ENCODE measurements at regions of chr16 and their contacts with region 1.

Region 1: DNA sequence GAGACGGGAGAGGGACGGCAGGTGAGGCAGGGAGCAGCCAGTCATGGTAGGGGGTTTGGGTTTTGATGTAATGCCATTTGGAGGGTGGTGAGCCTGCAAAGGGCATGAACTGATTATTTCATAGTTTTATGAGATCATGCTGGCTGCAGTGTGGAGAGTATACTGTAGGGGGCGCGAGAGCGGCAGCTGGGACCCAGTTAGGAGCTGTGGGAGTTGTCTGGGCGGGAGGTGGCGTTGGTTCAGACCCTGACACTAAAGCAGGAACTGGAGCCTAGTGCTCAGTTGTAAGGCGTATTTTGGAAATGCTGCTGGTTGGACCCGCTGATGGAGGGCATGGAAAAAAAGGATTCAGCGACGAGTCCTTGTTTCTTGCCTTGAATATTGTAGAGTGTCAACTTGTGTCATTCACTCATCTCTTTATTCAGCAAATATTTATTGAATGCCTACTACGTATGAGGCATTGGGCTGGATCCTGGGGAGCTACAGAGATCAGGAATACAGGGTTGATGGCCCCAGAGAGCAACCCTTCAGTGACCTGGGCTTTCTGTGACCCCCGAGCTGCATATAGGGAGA is 23.7 kb upstream of the KDM8 start:
- DNase-seq: peak; percentile 84
- CTCF ChIP-seq: peak; percentile 98

Region 2: GRCh38 chr16:27127308-27127707 is 52.3 kb before region 1 on chr16:
- in situ Hi-C with region 1: no loop called
- DNase-seq: no peak
- CTCF ChIP-seq: no peak

Region 3: DNA sequence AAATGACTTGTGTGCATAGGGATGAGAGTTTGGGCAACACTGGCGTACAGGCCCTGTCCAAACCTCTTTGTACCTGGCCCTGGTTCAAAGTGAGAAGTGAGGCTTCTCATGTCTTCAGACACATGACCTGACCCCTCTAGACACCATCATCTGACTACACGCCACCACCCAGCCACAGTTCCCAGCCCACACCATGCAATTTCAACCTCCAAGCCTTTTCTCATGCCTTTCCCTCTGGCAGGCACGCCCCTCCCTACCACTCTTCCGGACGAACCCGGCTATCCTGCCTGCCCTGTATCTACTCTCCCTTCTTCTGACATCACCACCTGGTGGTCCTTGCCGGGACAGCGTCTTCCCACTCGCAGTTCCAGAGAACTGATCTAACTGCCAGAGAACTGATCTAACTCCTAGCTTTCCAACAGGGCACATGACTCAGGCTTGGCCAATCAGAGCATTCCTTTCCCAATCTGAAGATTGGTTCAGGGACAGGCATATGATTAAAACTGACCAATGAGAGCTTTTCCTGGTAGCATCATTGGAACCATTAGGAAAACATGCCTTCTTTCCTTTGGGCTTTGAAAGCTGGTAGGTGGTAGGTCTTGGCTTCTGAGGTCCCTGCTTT is 195.3 kb after region 1 on chr16:
- in situ Hi-C with region 1: loop called (anchors 10 kb)
- DNase-seq: peak; percentile 68
- CTCF ChIP-seq: peak; percentile 19

Region 4: GRCh38 chr16:27449434-27450195 is 270.0 kb after region 1 on chr16:
- in situ Hi-C with region 1: loop called (anchors 10 kb)
- DNase-seq: peak; percentile 87
- CTCF ChIP-seq: peak; percentile 8